CD8-positive, alpha-beta T cell (primary cell): ENCODE measurements at regions of chr19 and their contacts with region 1.

Region 1: DNA sequence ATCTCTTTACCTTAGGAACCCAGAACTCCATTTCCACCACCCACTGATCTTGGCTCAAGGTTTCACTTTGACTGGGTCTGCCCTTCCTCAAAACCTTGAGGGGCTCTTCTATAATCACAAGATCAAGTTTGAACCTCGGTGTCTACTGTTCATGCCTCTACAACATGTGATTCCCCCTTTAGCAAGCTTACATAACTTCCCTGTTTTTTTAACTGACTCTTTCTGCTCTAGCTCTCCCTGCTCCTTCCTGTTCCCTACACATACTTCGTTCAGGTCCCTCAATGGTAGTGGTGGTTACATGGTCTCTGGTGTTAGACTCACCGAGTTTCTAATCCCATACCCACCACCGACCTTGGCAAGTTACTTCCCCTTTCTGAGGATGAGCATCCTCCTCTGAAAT is 26.7 kb downstream of the CEACAM8 start:
- DNase-seq: no peak
- ATAC-seq: no peak
- H3K4me3 ChIP-seq: no peak overlapping the region
- H3K4me3 Mint-ChIP-seq: no peak overlapping the region
- H3K27ac ChIP-seq: no peak overlapping the region
- H3K27ac Mint-ChIP-seq: no peak overlapping the region
- H3K4me1 ChIP-seq: no peaks in the 10 kb centered on the region
- H3K4me1 Mint-ChIP-seq: peaks cover 2% of the 10 kb centered on the region
- H3K27me3 ChIP-seq: no peaks in the 10 kb centered on the region
- H3K27me3 Mint-ChIP-seq: peaks cover 23% of the 10 kb centered on the region
- CTCF ChIP-seq: no peak

Region 2: DNA sequence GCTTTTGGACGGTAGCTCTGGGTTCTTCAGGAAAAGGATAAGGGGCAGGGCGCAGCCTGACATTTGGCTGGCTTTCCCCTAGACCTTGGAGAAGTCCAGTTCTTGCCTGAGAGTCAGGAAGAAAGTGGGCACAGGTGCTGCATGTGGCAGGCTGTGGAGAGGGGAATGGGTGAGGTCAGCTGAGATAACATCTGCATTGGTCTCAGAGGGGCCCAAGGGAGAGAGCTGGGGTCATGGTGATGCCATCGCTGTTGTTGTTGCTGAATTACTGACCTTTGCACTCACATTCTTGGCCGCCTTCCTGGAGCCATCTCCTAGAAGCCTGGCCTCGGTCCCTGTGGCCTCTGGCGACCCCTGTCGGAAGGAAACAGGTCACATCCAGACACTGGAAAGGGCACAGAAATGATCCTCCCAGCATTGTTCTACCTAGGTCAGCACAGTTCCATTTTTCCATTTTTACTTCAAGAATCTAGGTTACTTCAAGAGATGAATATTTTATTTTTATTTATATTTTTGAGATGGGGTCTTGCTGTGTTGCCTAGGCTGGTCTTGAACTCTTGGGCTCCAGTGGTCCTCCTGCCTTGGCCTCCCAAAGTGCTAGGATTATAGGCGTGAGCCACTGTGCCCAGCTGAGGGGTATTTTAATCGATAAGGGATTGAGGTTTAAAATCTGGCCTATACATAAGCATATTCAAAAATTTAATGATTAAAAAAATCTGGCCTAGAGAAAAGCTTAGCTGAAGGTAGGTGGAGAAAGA is 134.3 kb before region 1 on chr19:
- CTCF ChIA-PET with region 1: no interaction called
- POLR2A ChIA-PET with region 1: no interaction called
- intact Hi-C with region 1: no loop called
- DNase-seq: peak; percentile 32 to 77 (median 66)
- ATAC-seq: peak; percentile 43
- H3K4me3 ChIP-seq: no peak overlapping the region
- H3K4me3 Mint-ChIP-seq: no peak overlapping the region
- H3K27ac ChIP-seq: no peak overlapping the region
- H3K27ac Mint-ChIP-seq: no peak overlapping the region
- H3K4me1 ChIP-seq: no peaks in the 10 kb centered on the region
- H3K4me1 Mint-ChIP-seq: peaks cover 4% of the 10 kb centered on the region
- H3K27me3 ChIP-seq: no peaks in the 10 kb centered on the region
- H3K27me3 Mint-ChIP-seq: no peaks in the 10 kb centered on the region
- CTCF ChIP-seq: peak; percentile 62

Region 3: GRCh38 chr19:42596391-42597072 is 28.5 kb after region 1 on chr19:
- CTCF ChIA-PET with region 1: interaction called, 18 read pairs
- POLR2A ChIA-PET with region 1: no interaction called
- intact Hi-C with region 1: no loop called
- DNase-seq: peak in 7 of 9 experiments; percentile 12 to 60 (median 48)
- ATAC-seq: no peak
- H3K4me3 ChIP-seq: no peak overlapping the region
- H3K4me3 Mint-ChIP-seq: no peak overlapping the region
- H3K27ac ChIP-seq: no peak overlapping the region
- H3K27ac Mint-ChIP-seq: no peak overlapping the region
- H3K4me1 ChIP-seq: no peaks in the 10 kb centered on the region
- H3K4me1 Mint-ChIP-seq: no peaks in the 10 kb centered on the region
- H3K27me3 ChIP-seq: no peaks in the 10 kb centered on the region
- H3K27me3 Mint-ChIP-seq: peaks cover 20% of the 10 kb centered on the region
- CTCF ChIP-seq: peak; percentile 99